ENCODE measurements at regions of chr2 and their contacts with region 1.

Region 1: DNA sequence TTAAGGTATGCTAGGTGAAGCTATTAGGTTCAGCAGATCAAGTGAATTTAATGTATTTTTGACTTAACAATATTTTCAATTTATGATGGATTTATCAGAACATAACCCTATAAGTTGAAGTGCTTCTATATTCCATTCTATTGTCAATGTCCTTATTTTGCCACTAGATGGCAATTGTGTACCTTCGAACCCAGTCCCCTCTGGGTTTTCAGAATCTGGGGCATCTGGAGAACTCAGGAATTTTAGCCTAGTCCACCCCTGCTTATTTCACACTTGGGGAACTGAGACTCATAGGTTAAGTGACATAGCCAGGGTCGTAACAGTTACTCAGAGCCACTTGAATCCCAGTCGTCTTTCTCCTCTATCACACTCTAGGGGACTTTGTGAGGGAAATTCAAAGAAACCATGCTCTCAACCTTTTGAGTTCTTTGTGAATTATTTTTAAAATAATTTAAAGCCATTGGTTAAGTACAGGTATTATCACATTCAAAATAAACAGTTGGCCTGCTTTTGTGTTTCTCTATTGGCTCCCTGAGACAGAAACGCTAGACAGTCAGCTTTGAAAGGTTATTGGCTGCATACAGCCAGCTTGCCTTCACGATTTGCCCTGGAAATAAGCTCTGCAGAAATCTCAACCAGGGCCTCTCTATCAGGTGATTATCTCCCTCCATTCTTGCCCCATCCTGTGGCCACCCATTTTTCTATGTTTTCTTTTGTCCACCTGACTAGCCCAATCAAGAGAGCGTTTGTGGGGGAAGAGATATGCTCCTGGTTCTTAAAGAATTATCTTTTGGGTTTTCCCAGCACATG is 145.0 kb downstream of the TTC27 start:
- DNase-seq: peak in 1 of 3 donors; percentile 7
- ATAC-seq: peak; percentile 57
- H3K4me3 ChIP-seq: no peak overlapping the region
- H3K4me1 ChIP-seq: no peaks in the 10 kb centered on the region
- CTCF ChIP-seq: no peak

Region 2: GRCh38 chr2:31725444-31725843 is 1047.4 kb before region 1 on chr2:
- intact Hi-C with region 1: no loop called
- DNase-seq: no peak
- ATAC-seq: no peak
- H3K4me3 ChIP-seq: no peak overlapping the region
- H3K4me1 ChIP-seq: no peaks in the 10 kb centered on the region
- CTCF ChIP-seq: no peak

Region 3: DNA sequence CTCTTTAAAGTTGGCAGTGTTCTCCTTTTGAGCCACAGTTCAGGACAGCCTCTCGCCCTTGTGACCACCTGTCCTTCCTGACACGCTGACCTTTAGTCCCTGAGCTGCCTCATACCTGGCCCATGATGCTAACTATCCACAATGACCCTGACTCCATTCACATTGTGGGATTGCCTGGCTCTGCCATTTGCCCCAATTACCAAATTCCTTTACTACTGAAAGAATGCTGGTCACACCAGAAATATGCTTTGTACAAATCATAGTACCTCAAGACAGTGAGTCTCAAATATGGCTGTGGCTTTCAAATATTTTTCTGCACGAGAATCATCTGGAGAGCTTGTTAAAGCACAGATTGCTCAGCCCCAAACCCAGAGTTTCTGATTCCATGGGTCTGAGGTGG is 228.1 kb after region 1 on chr2:
- intact Hi-C with region 1: no loop called
- DNase-seq: no peak
- ATAC-seq: no peak
- H3K4me3 ChIP-seq: no peak overlapping the region
- H3K4me1 ChIP-seq: peaks cover 3% of the 10 kb centered on the region
- CTCF ChIP-seq: no peak

Region 4: DNA sequence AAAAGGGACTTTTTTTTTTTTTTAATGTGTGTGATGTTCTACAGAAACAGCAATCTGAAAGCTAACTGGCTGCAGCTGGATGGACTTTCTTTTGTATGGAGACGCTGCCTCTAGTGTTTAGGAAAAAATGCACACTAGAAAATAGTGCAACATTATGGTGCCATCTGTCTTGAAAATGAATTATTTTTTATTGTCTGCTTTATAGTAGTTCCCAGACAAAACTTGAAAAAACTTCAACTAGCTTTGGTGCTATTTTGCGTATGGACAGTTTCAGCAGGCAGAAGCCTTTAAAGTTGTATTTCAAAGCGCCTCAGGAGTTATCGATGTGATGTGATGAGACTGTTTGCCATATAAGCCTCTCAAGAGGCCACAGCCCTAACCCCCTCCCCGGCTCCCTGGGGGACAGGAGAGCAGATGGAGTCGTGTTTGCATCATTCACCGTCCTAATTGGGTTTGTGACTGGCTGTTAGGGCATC is 260.8 kb after region 1 on chr2:
- intact Hi-C with region 1: loop called in 1 of 2 experiments (anchors 5 kb)
- DNase-seq: no peak
- ATAC-seq: peak; percentile 72
- H3K4me3 ChIP-seq: no peak overlapping the region
- H3K4me1 ChIP-seq: peaks cover 7% of the 10 kb centered on the region
- CTCF ChIP-seq: no peak

Region 5: GRCh38 chr2:33366473-33366872 is 593.6 kb after region 1 on chr2:
- intact Hi-C with region 1: loop called in 1 of 2 experiments (anchors 5 kb)
- DNase-seq: no peak
- ATAC-seq: no peak
- H3K4me3 ChIP-seq: no peak overlapping the region
- H3K4me1 ChIP-seq: no peaks in the 10 kb centered on the region
- CTCF ChIP-seq: no peak

Measured in mucosa of descending colon (tissue), 3 donors.